ENCODE measurements at regions of chr7 and their contacts with region 1.

Region 1: GRCh38 chr7:12695965-12696364 is 8.5 kb downstream of the ARL4A start:
- DNase-seq: no peak
- H3K4me3 ChIP-seq: no peak overlapping the region
- H3K4me3 Mint-ChIP-seq: no peak overlapping the region
- H3K27ac ChIP-seq: no peak overlapping the region
- H3K27ac Mint-ChIP-seq: no peak overlapping the region
- H3K4me1 ChIP-seq: peaks cover 10% of the 10 kb centered on the region
- H3K4me1 Mint-ChIP-seq: peaks cover 12 to 30% (median 17%) of the 10 kb centered on the region in 4 donors
- H3K27me3 ChIP-seq: no peaks in the 10 kb centered on the region
- H3K27me3 Mint-ChIP-seq: no peaks in the 10 kb centered on the region

Region 2: DNA sequence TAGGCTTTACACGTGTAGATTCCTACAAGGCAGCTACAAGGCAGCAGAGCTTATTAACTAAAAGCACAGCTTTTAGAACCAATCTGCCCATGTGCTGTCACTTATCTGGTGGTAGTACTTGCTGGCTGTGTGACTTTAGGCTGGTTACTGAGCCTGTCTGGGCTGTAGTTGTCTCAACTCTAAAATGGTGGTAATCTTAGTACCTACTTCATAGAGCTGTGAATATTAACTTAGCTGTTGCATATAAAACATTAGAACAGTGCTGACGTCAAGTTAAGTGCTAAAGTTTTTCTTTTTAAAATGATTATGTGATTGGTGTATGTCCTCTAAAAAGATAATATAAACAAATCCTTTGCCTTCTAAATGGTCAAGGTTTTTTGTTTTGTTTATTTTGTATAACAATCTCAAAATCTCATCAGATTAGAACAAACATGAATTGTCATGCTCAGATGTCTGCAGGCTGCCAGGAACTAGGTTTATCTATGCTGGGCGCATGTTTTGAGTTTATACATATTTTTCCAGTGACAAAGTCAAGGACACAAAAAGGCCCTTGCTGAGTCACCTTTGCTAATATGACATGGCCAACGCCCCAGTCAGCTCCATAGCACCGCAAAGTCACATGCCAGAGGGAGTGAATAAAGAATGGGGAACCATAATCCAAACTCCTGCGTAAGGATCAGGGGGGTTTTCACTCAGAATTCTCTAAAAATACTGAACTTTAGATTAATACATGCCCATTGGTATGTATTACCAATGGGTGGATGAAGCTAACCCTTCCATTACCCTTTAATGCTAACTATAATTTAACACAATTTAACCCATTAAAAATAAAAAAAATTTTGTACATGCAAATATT is 48.4 kb before region 1 on chr7:
- CTCF ChIA-PET with region 1: no interaction called
- POLR2A ChIA-PET with region 1: no interaction called
- intact Hi-C with region 1: no loop called
- DNase-seq: no peak
- H3K4me3 ChIP-seq: no peak overlapping the region
- H3K4me3 Mint-ChIP-seq: no peak overlapping the region
- H3K27ac ChIP-seq: no peak overlapping the region
- H3K27ac Mint-ChIP-seq: no peak overlapping the region
- H3K4me1 ChIP-seq: no peaks in the 10 kb centered on the region
- H3K4me1 Mint-ChIP-seq: no peaks in the 10 kb centered on the region
- H3K27me3 ChIP-seq: no peaks in the 10 kb centered on the region
- H3K27me3 Mint-ChIP-seq: peaks cover 0 to 2% of the 10 kb centered on the region in 2 donors

Region 3: DNA sequence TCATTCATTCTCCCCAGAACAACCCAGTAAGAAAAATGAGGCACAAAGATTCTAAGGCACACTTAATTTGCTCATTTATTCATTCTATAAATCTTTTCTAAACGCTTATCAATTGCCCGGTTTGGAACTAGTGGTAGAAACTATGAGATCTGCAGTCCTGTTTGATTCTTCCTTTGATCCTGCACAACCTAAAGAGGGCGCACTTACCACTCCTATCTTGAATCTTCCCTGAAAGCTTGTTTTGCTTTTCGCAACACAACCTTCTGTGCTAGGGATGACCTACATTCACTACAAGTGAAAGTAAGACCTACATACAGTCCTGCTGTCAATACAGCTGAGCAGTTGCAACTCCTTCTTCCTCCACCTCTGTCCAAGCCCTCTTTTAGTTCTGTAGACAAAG is 21.1 kb before region 1 on chr7:
- CTCF ChIA-PET with region 1: no interaction called
- POLR2A ChIA-PET with region 1: no interaction called
- intact Hi-C with region 1: loop called (anchors 2 kb)
- DNase-seq: peak; percentile 68 to 80 (median 70)
- H3K4me3 ChIP-seq: no peak overlapping the region
- H3K4me3 Mint-ChIP-seq: peak overlapping the region in 5 of 8 donors; percentile 4 to 24 (median 14)
- H3K27ac ChIP-seq: no peak overlapping the region
- H3K27ac Mint-ChIP-seq: peak overlapping the region; percentile 6 to 80 (median 67)
- H3K4me1 ChIP-seq: peaks cover 8% of the 10 kb centered on the region
- H3K4me1 Mint-ChIP-seq: peaks cover 11 to 19% (median 15%) of the 10 kb centered on the region in 4 donors
- H3K27me3 ChIP-seq: no peaks in the 10 kb centered on the region
- H3K27me3 Mint-ChIP-seq: no peaks in the 10 kb centered on the region